CD14-positive monocyte (primary cell): ENCODE measurements at regions of chr5 and their contacts with region 1.

Region 1: DNA sequence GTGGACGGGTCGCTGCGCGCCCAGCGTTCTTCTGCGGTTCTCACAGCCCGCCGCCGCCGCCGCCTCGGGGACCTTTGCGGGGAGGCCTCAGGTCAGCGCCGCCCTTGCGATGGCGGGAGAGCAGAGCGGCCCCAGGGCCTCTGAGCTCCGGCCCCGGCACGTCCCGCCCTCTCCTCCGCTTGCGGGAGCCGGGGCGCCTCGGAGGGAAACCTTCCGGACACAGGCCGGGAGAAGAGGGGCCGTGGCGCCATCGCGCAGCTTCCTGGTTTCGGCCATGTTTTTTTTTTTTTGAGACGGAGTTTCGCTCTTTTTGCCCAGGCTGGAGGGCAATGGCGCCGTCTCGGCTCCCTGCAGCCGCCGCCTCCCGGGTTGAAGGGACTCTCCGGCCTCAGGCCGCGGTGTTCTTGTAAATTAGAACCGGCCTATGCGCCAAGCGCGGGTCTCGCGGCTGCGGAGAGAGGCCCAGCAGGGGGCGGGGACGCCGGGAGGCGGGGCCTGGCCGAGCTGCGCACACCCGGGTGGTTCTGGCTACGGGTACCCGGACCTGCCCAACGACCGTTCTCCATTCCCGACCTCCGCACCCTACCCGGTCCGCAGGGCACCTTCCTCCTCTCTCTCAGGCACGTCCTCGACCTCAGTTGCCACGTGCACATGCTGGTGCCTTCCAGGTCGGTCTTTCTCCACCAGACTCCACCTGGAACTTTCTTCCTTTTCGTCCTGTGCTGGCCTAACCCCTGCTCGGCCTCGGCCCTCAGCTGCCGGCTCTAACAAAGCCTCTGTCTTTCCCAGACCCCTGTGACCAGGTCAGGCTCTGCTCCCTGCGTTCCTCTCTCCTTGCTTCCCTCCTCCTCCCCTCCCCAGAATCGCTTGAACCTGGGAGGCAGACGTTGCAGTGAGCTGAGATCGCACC is 28.8 kb upstream of the MGAT1 start:
- DNase-seq: peak; percentile 68 to 75 (median 74)
- H3K4me3 ChIP-seq: peak overlapping the region; percentile 70 to 91 (median 89)
- H3K4me3 Mint-ChIP-seq: peak overlapping the region; percentile 93 to 99
- H3K27ac ChIP-seq: peak overlapping the region; percentile 96 to 98
- H3K27ac Mint-ChIP-seq: peak overlapping the region; percentile 98 to 99 (median 98)
- H3K4me1 ChIP-seq: peaks cover 40 to 45% of the 10 kb centered on the region in 2 donors
- H3K4me1 Mint-ChIP-seq: peaks cover 53% of the 10 kb centered on the region
- H3K27me3 ChIP-seq: no peaks in the 10 kb centered on the region
- H3K27me3 Mint-ChIP-seq: peaks cover 0 to 2% (median 0%) of the 10 kb centered on the region in 3 donors
- CTCF ChIP-seq: peak; percentile 18

Region 2: GRCh38 chr5:180802325-180803180 is 28.8 kb before region 1 on chr5 and contains the start of gene MGAT1:
- intact Hi-C with region 1: loop called (anchors 2 to 5 kb)
- DNase-seq: peak; percentile 82 to 87 (median 82)
- H3K4me3 ChIP-seq: peak within 1 kb of the TSS; percentile 97 to 98 (median 98)
- H3K4me3 Mint-ChIP-seq: peak within 1 kb of the TSS; percentile 95 to 97
- H3K27ac ChIP-seq: peak within 1 kb of the TSS; percentile 97 to 98
- H3K27ac Mint-ChIP-seq: peak within 1 kb of the TSS; percentile 94 to 98 (median 97)
- H3K4me1 ChIP-seq: peaks cover 82 to 88% of the 10 kb centered on the region in 2 donors
- H3K4me1 Mint-ChIP-seq: peaks cover 82% of the 10 kb centered on the region
- H3K27me3 ChIP-seq: no peaks in the 10 kb centered on the region
- H3K27me3 Mint-ChIP-seq: no peaks in the 10 kb centered on the region
- CTCF ChIP-seq: no peak
- polyA plus RNA-seq, gene MGAT1: 231 to 523 (median 385) TPM

Region 3: DNA sequence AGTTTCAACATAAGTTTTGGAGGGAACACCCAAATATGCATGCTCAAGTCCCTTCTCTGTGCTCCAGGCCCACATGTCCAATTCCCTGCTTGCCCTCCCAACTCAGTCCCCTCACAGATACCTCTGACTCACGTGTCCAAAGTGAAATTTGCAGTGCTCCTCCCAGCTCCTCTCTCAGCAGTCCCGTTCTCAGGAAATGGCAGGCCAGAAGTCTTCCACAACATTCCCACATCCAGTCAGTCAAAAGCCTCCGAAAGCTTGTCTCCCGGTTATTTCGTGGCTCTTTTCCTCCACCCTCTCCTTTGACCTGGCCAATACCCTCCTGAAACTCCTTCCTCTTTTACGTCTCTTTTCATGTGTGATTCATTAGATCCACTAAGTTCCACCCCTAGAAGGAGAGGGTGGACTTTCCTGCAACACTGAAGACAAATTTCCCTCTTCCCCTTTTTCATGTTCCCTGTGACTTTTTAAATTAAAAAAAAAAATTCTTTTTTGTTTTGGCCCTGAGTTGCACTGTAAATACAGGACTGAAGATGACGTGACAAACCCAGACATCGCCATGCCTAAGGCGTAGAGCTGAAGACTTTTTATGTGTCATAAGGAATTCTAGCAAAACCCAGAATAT is 16.0 kb before region 1 on chr5:
- intact Hi-C with region 1: loop called in 1 of 2 experiments (anchors 2 kb)
- DNase-seq: peak; percentile 82 to 94 (median 87)
- H3K4me3 ChIP-seq: peak overlapping the region; percentile 72 to 99 (median 98)
- H3K4me3 Mint-ChIP-seq: peak overlapping the region; percentile 95 to 100
- H3K27ac ChIP-seq: peak overlapping the region; percentile 89 to 95
- H3K27ac Mint-ChIP-seq: peak overlapping the region; percentile 96 to 99 (median 97)
- H3K4me1 ChIP-seq: peaks cover 74 to 86% of the 10 kb centered on the region in 2 donors
- H3K4me1 Mint-ChIP-seq: peaks cover 74% of the 10 kb centered on the region
- H3K27me3 ChIP-seq: no peaks in the 10 kb centered on the region
- H3K27me3 Mint-ChIP-seq: peaks cover 0 to 5% (median 2%) of the 10 kb centered on the region in 3 donors
- CTCF ChIP-seq: no peak